ENCODE measurements at regions of chr7 and their contacts with region 1.

Region 1: DNA sequence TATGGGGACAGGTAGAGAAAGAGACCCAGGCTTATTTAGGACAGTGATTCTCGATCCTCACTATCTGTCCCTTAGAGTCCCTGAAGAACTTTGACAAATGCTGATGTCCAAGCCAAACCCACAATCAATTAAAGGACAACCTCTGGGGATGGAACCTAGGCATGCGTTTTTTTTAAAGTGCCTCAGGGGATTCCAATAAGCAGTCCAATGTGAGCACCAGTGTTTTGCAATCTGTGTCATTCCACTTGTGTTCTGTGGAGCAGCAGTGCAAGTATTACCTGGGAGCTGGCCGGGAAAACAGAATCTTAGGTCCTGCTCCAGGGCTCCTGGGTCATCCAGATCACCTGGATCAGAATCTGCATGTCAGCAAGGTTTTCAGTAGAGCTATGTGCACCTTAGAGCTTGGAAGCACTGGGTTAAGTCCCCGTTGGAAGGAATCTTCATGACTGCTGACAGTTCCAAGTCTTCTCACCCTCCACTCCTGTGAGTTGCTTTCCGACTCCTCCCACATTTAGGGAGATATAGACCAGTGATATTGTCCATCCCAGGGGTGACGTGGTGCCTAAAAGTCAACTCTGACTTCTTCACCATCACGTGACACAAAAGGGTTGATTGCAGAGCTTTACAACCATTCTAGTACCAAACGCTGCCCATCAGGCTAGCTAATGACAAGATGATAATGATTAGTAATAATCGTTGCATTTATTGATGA is 85.0 kb upstream of the CARD11 start:
- DNase-seq: no peak
- H3K4me3 ChIP-seq: no peak overlapping the region
- H3K27ac ChIP-seq: no peak overlapping the region
- H3K4me1 ChIP-seq: no peaks in the 10 kb centered on the region
- H3K27me3 ChIP-seq: no peaks in the 10 kb centered on the region
- CTCF ChIP-seq: no peak
- EP300 ChIP-seq: no peak
- POLR2A ChIP-seq: no peak

Region 2: GRCh38 chr7:2958516-2959352 is 169.9 kb before region 1 on chr7:
- in situ Hi-C with region 1: no loop called
- intact Hi-C with region 1: loop called (anchors 1 kb)
- DNase-seq: no peak
- H3K4me3 ChIP-seq: no peak overlapping the region
- H3K27ac ChIP-seq: no peak overlapping the region
- H3K4me1 ChIP-seq: peaks cover 0 to 2% (median 0%) of the 10 kb centered on the region in 4 donors
- H3K27me3 ChIP-seq: no peaks in the 10 kb centered on the region
- CTCF ChIP-seq: no peak
- EP300 ChIP-seq: no peak
- POLR2A ChIP-seq: no peak

Measured in transverse colon (tissue), 4 donors.